ENCODE measurements at regions of chr11 and their contacts with region 1.

Region 1: GRCh38 chr11:107669893-107670601 is 41.8 kb downstream of the SLN start:
- DNase-seq: no peak
- H3K4me3 Mint-ChIP-seq: no peak overlapping the region
- H3K27ac Mint-ChIP-seq: no peak overlapping the region
- H3K4me1 Mint-ChIP-seq: no peaks in the 10 kb centered on the region
- H3K27me3 Mint-ChIP-seq: peaks cover 7% of the 10 kb centered on the region

Region 2: GRCh38 chr11:107689317-107690202 is 19.5 kb after region 1 on chr11:
- CTCF ChIA-PET with region 1: interaction called, 12 read pairs
- intact Hi-C with region 1: no loop called
- DNase-seq: peak; percentile 81
- H3K4me3 Mint-ChIP-seq: no peak overlapping the region
- H3K27ac Mint-ChIP-seq: no peak overlapping the region
- H3K4me1 Mint-ChIP-seq: no peaks in the 10 kb centered on the region
- H3K27me3 Mint-ChIP-seq: peaks cover 13% of the 10 kb centered on the region

Region 3: GRCh38 chr11:107916671-107917241 is 246.7 kb after region 1 on chr11:
- CTCF ChIA-PET with region 1: no interaction called
- intact Hi-C with region 1: no loop called
- DNase-seq: peak; percentile 43
- H3K4me3 Mint-ChIP-seq: no peak overlapping the region
- H3K27ac Mint-ChIP-seq: no peak overlapping the region
- H3K4me1 Mint-ChIP-seq: no peaks in the 10 kb centered on the region
- H3K27me3 Mint-ChIP-seq: peaks cover 2% of the 10 kb centered on the region